B cell (primary cell): ENCODE measurements at regions of chr6 and their contacts with region 1.

Region 1: GRCh38 chr6:34791701-34792235 is at the start of gene BLTP3A:
- DNase-seq: peak; percentile 90
- ATAC-seq: peak; percentile 93
- H3K4me3 ChIP-seq: peak within 1 kb of the TSS; percentile 81 to 93 (median 90)
- H3K4me3 Mint-ChIP-seq: peak within 1 kb of the TSS; percentile 94
- H3K27ac ChIP-seq: peak within 1 kb of the TSS; percentile 71 to 83
- H3K27ac Mint-ChIP-seq: peak within 1 kb of the TSS; percentile 94
- H3K4me1 ChIP-seq: peaks cover 17 to 19% of the 10 kb centered on the region in 2 donors
- H3K4me1 Mint-ChIP-seq: peaks cover 22% of the 10 kb centered on the region
- H3K27me3 ChIP-seq: no peaks in the 10 kb centered on the region
- H3K27me3 Mint-ChIP-seq: no peaks in the 10 kb centered on the region
- CTCF ChIP-seq: no peak
- total RNA-seq, gene BLTP3A: 11.3 and 13.2 TPM in 2 replicates

Region 2: GRCh38 chr6:34154668-34155447 is 636.9 kb before region 1 on chr6:
- CTCF ChIA-PET with region 1: no interaction called
- POLR2A ChIA-PET with region 1: no interaction called
- intact Hi-C with region 1: no loop called
- DNase-seq: peak; percentile 76
- ATAC-seq: peak; percentile 94
- H3K4me3 ChIP-seq: peak overlapping the region in 3 of 5 experiments; percentile 33 to 39 (median 36)
- H3K4me3 Mint-ChIP-seq: peak overlapping the region; percentile 55
- H3K27ac ChIP-seq: no peak overlapping the region
- H3K27ac Mint-ChIP-seq: no peak overlapping the region
- H3K4me1 ChIP-seq: peaks cover 14 to 21% of the 10 kb centered on the region in 2 donors
- H3K4me1 Mint-ChIP-seq: peaks cover 16% of the 10 kb centered on the region
- H3K27me3 ChIP-seq: peaks cover 0 to 46% (median 18%) of the 10 kb centered on the region in 4 experiments
- H3K27me3 Mint-ChIP-seq: peaks cover 42% of the 10 kb centered on the region
- CTCF ChIP-seq: peak; percentile 99

Region 3: DNA sequence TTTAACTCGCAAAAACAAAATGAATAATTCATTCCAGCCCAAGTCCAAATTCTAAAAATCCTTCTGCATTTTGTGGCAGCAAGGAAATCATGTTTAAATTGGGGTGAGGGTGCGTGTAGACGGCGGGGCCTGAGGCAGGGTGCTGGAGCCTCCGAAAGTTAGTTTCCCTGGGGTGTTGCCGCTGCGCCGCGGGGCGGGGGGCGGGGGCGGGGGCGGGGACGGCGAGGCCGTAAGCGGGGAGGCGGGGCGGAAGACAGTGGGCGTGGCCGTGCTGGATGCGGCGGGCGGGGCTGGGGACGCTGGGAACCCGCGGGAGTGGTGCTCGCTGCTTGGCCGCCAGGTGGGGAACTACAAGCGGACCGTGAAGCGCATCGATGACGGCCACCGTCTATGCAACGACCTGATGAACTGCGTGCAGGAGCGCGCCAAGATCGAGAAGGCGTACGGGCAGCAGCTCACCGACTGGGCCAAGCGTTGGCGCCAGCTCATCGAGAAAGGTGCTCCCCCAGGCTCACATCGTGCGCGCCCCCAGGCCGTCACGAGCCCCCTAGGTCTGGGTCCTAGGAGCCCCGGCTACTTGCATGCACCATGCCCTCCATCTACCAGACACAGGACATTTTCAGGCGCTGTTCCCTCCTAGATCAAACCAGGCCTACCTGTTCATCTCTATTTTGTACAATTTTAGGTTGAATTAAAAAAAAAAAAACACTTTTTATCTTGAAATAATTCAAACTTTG is 264.6 kb before region 1 on chr6:
- CTCF ChIA-PET with region 1: no interaction called
- POLR2A ChIA-PET with region 1: no interaction called
- intact Hi-C with region 1: loop called (anchors 1 kb)
- DNase-seq: peak; percentile 96
- ATAC-seq: peak; percentile 99
- H3K4me3 ChIP-seq: peak overlapping the region in 4 of 5 experiments; percentile 11 to 44 (median 30)
- H3K4me3 Mint-ChIP-seq: peak overlapping the region; percentile 71
- H3K27ac ChIP-seq: peak overlapping the region in 1 of 2 donors; percentile 22
- H3K27ac Mint-ChIP-seq: peak overlapping the region; percentile 78
- H3K4me1 ChIP-seq: peaks cover 7 to 13% of the 10 kb centered on the region in 2 donors
- H3K4me1 Mint-ChIP-seq: peaks cover 10% of the 10 kb centered on the region
- H3K27me3 ChIP-seq: no peaks in the 10 kb centered on the region
- H3K27me3 Mint-ChIP-seq: no peaks in the 10 kb centered on the region
- CTCF ChIP-seq: peak; percentile 65